PC-9 (cell line): ENCODE measurements at regions of chr3 and their contacts with region 1.

Region 1: DNA sequence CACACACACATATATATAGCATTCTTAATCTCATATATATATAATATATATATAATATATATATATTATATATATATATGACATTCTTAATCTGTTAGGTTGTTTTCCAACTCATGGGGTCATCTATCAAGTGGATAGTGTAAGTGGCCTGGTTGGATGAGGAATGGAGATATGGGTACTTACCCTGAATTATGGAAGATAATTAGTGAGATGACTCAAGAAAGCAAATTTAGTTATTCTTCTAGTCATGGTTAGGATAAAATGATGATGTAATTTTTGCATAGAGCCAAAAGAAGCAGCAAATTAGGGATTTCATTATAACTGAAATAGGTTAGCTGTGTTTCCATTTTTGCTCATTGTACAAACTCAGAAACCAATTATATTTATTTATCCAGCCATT is 448.2 kb downstream of the LPP start:
- DNase-seq: no peak
- H3K4me3 ChIP-seq: no peak overlapping the region
- H3K27ac ChIP-seq: no peak overlapping the region
- H3K4me1 ChIP-seq: no peaks in the 10 kb centered on the region
- H3K27me3 ChIP-seq: no peaks in the 10 kb centered on the region
- CTCF ChIP-seq: no peak

Region 2: GRCh38 chr3:187550446-187550845 is 1051.7 kb before region 1 on chr3:
- CTCF ChIA-PET with region 1: no interaction called
- POLR2A ChIA-PET with region 1: interaction called, 19 read pairs
- intact Hi-C with region 1: no loop called
- DNase-seq: no peak
- H3K4me3 ChIP-seq: no peak overlapping the region
- H3K27ac ChIP-seq: no peak overlapping the region
- H3K4me1 ChIP-seq: no peaks in the 10 kb centered on the region
- H3K27me3 ChIP-seq: peaks cover 60% of the 10 kb centered on the region
- CTCF ChIP-seq: no peak